Activated naive CD4-positive, alpha-beta T cell treated with anti-CD3 and anti-CD28 coated beads for 36 hours (primary cell): ENCODE measurements at regions of chr14 and their contacts with region 1.

Region 1: GRCh38 chr14:99245564-99246511 is 26.2 kb downstream of the BCL11B start:
- DNase-seq: no peak
- H3K4me3 Mint-ChIP-seq: peak overlapping the region; percentile 77
- H3K27ac Mint-ChIP-seq: peak overlapping the region; percentile 93
- H3K4me1 Mint-ChIP-seq: peaks cover 76% of the 10 kb centered on the region
- H3K27me3 Mint-ChIP-seq: no peaks in the 10 kb centered on the region

Region 2: GRCh38 chr14:99230208-99231151 is 15.4 kb before region 1 on chr14:
- CTCF ChIA-PET with region 1: interaction called, 21 read pairs
- intact Hi-C with region 1: loop called (anchors 1 kb)
- DNase-seq: peak; percentile 93
- H3K4me3 Mint-ChIP-seq: peak overlapping the region; percentile 73
- H3K27ac Mint-ChIP-seq: peak overlapping the region; percentile 97
- H3K4me1 Mint-ChIP-seq: peaks cover 95% of the 10 kb centered on the region
- H3K27me3 Mint-ChIP-seq: no peaks in the 10 kb centered on the region

Region 3: DNA sequence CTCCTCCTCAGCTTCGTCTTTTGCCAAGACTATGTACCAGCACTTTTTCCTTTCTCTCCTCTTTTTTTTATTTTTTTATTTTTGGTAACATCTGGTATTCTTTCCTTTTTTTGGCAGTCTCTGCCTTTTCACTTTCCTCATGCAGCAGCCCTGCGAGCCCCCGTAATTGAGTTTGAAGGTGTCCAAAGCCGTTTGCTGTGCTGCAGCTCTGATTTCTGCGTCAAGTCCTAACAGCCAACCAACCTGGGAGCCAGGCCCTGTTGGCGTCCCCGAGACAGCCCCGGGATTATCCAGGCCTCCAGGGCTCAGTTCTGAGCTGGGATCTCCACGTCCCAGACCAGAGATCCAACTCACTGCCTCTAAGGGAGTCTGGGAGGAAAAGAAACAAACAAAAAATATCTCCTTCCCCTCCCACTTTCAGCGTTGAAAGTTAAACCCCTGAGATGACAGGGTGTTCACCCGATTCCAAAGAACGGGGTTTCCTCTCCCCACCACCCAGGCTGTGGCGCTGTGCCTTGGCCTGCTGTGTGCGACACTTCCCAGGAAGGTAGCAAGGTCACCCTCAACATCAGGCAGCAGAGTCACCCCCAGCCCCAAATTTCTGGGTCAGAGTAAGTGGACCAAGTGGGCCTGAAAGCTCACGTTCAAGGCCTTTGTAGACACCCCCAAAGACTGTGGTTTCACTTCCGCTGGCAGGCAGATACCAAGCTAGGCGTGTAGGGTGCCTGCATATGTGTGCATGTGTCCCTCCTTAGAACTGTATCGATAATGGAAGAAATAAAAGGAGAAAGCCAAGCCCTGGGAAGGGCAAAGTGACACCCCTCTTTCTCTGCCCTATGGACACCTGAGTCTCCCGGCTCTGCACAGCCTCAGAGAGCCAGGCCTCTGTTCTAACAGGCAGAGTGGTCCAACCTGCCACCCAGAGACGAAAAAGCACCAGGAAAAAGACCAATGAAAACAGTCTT is 15.0 kb after region 1 on chr14:
- CTCF ChIA-PET with region 1: interaction called, 44 read pairs
- intact Hi-C with region 1: loop called (anchors 1 kb)
- DNase-seq: peak; percentile 72
- H3K4me3 Mint-ChIP-seq: peak overlapping the region; percentile 96
- H3K27ac Mint-ChIP-seq: peak overlapping the region; percentile 95
- H3K4me1 Mint-ChIP-seq: peaks cover 84% of the 10 kb centered on the region
- H3K27me3 Mint-ChIP-seq: no peaks in the 10 kb centered on the region